CD8-positive, alpha-beta memory T cell (primary cell): ENCODE measurements at regions of chr6 and their contacts with region 1.

Region 1: GRCh38 chr6:43506667-43507471 is 3.3 kb downstream of the LRRC73 start:
- DNase-seq: peak; percentile 65 to 83 (median 71)
- H3K4me3 ChIP-seq: no peak overlapping the region
- H3K4me3 Mint-ChIP-seq: peak overlapping the region in 1 of 7 donors; percentile 66
- H3K27ac ChIP-seq: no peak overlapping the region
- H3K27ac Mint-ChIP-seq: peak overlapping the region in 7 of 8 donors; percentile 5 to 95 (median 66)
- H3K4me1 ChIP-seq: peaks cover 14% of the 10 kb centered on the region
- H3K4me1 Mint-ChIP-seq: peaks cover 16 to 35% (median 30%) of the 10 kb centered on the region in 3 donors
- H3K27me3 ChIP-seq: peaks cover 10% of the 10 kb centered on the region
- H3K27me3 Mint-ChIP-seq: peaks cover 5 to 14% of the 10 kb centered on the region in 2 donors

Region 2: DNA sequence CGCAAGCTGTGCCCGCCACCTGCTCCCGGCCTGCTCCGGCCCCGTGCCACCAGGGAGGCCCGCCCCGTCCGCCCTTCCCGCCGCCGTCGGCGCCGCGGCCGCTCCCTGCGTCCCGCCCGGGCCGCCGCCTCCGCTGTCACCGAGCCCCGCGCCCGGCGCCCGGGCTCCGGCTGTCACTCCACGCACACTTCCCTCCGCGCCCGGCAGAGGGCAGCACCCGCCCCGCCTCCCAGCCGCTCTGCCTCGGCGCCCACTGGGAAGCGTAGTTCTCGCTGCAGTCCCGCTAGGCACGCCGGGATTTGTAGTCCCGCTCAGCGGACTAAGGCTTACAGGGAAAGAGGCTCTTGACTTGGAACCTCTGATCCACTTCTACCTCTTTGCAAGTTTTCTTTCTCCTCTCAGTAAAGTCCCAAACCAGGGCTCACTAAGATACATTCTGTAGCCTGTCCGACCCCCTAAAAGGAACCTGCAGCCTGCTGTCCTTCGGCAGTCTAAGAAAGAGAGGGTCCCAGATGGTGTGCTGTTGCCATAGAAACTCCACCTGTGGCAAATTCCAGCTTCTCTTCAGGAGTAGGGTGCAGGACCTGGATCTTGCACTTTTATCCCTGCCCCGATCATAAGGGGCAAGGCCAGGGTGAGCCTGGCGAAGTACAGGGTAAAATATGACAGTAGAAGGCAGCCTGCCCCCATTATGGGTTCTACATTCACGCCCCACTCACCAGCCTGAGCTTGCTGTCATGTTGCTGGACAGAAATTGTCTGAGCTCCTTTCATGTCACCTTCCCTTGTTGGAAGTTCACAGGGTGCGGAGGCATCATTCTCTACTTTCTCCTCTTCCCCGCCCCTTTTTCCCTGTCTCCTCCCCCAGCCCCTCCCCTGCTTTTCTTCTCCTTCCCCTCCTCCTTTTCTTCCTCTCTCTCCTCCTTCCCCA is 1771.2 kb before region 1 on chr6 and contains the start of gene TFEB:
- CTCF ChIA-PET with region 1: no interaction called
- POLR2A ChIA-PET with region 1: no interaction called
- DNase-seq: peak; percentile 89 to 94 (median 91)
- H3K4me3 ChIP-seq: peak within 1 kb of the TSS; percentile 54
- H3K4me3 Mint-ChIP-seq: peak within 1 kb of the TSS; percentile 81 to 94 (median 84)
- H3K27ac ChIP-seq: peak within 1 kb of the TSS; percentile 65
- H3K27ac Mint-ChIP-seq: peak within 1 kb of the TSS; percentile 50 to 96 (median 81)
- H3K4me1 ChIP-seq: peaks cover 38% of the 10 kb centered on the region
- H3K4me1 Mint-ChIP-seq: peaks cover 30 to 36% (median 31%) of the 10 kb centered on the region in 3 donors
- H3K27me3 ChIP-seq: no peaks in the 10 kb centered on the region
- H3K27me3 Mint-ChIP-seq: no peaks in the 10 kb centered on the region
- total RNA-seq, gene TFEB: 12.0 to 12.5 TPM

Region 3: GRCh38 chr6:43454696-43455530 is 52.0 kb before region 1 on chr6:
- CTCF ChIA-PET with region 1: interaction called, 61 read pairs
- POLR2A ChIA-PET with region 1: interaction called, 5 read pairs
- DNase-seq: peak; percentile 8 to 58 (median 27)
- H3K4me3 ChIP-seq: peak overlapping the region; percentile 74
- H3K4me3 Mint-ChIP-seq: peak overlapping the region; percentile 45 to 92 (median 83)
- H3K27ac ChIP-seq: no peak overlapping the region
- H3K27ac Mint-ChIP-seq: peak overlapping the region in 3 of 8 donors; percentile 32 to 87 (median 87)
- H3K4me1 ChIP-seq: peaks cover 11% of the 10 kb centered on the region
- H3K4me1 Mint-ChIP-seq: peaks cover 11 to 16% (median 14%) of the 10 kb centered on the region in 3 donors
- H3K27me3 ChIP-seq: no peaks in the 10 kb centered on the region
- H3K27me3 Mint-ChIP-seq: peaks cover 0 to 5% of the 10 kb centered on the region in 2 donors

Region 4: GRCh38 chr6:43516697-43517504 is 10.0 kb after region 1 on chr6 and contains the starts of genes POLR1C and YIPF3:
- CTCF ChIA-PET with region 1: interaction called, 24 read pairs
- POLR2A ChIA-PET with region 1: interaction called, 3 read pairs
- DNase-seq: peak; percentile 94 to 98 (median 95)
- H3K4me3 ChIP-seq: peak within 1 kb of the TSS; percentile 99
- H3K4me3 Mint-ChIP-seq: no peak within 1 kb of the TSS
- H3K27ac ChIP-seq: peak within 1 kb of the TSS; percentile 91
- H3K27ac Mint-ChIP-seq: no peak within 1 kb of the TSS
- H3K4me1 ChIP-seq: peaks cover 41% of the 10 kb centered on the region
- H3K4me1 Mint-ChIP-seq: peaks cover 11 to 37% (median 26%) of the 10 kb centered on the region in 3 donors
- H3K27me3 ChIP-seq: no peaks in the 10 kb centered on the region
- H3K27me3 Mint-ChIP-seq: peaks cover 0 to 2% of the 10 kb centered on the region in 2 donors
- total RNA-seq, gene POLR1C: 122 to 124 TPM
- total RNA-seq, gene YIPF3: 48.9 to 49.1 TPM